Naive thymus-derived CD4-positive, alpha-beta T cell (primary cell): ENCODE measurements at regions of chr3 and their contacts with region 1.

Region 1: GRCh38 chr3:127598841-127599570 is 795 bp downstream of the MCM2 start:
- DNase-seq: no peak
- ATAC-seq: no peak
- H3K4me3 ChIP-seq: peak overlapping the region; percentile 75
- H3K4me3 Mint-ChIP-seq: peak overlapping the region; percentile 62 to 89 (median 82)
- H3K27ac ChIP-seq: peak overlapping the region; percentile 70
- H3K27ac Mint-ChIP-seq: peak overlapping the region; percentile 57 to 93 (median 86)
- H3K4me1 ChIP-seq: peaks cover 7% of the 10 kb centered on the region in 2 donors
- H3K4me1 Mint-ChIP-seq: peaks cover 13 to 57% (median 16%) of the 10 kb centered on the region in 7 donors
- H3K27me3 ChIP-seq: no peaks in the 10 kb centered on the region
- H3K27me3 Mint-ChIP-seq: no peaks in the 10 kb centered on the region

Region 2: GRCh38 chr3:126357295-126358037 is 1241.5 kb before region 1 on chr3 and contains the start of gene KLF15:
- CTCF ChIA-PET with region 1: no interaction called
- POLR2A ChIA-PET with region 1: no interaction called
- intact Hi-C with region 1: loop called in 1 of 2 experiments (anchors 5 kb)
- DNase-seq: peak; percentile 50 to 84 (median 66)
- ATAC-seq: peak; percentile 95
- H3K4me3 ChIP-seq: peak within 1 kb of the TSS; percentile 67
- H3K4me3 Mint-ChIP-seq: peak within 1 kb of the TSS; percentile 89 to 95 (median 91)
- H3K27ac ChIP-seq: no peak within 1 kb of the TSS
- H3K27ac Mint-ChIP-seq: peak within 1 kb of the TSS in 5 of 9 donors; percentile 45 to 93 (median 72)
- H3K4me1 ChIP-seq: peaks cover 4 to 7% of the 10 kb centered on the region in 2 donors
- H3K4me1 Mint-ChIP-seq: peaks cover 4 to 17% (median 11%) of the 10 kb centered on the region in 7 donors
- H3K27me3 ChIP-seq: peaks cover 9 to 10% of the 10 kb centered on the region in 2 donors
- H3K27me3 Mint-ChIP-seq: peaks cover 45 to 52% (median 46%) of the 10 kb centered on the region in 5 donors
- total RNA-seq, gene KLF15: 0.57 to 0.81 TPM in 2 of 5 experiments, not detected in the others

Region 3: GRCh38 chr3:127628788-127629466 is 29.9 kb after region 1 on chr3 and contains the start of gene PODXL2:
- CTCF ChIA-PET with region 1: no interaction called
- POLR2A ChIA-PET with region 1: interaction called, 16 read pairs
- intact Hi-C with region 1: loop called (anchors 1 to 2 kb)
- DNase-seq: peak in 8 of 9 donors; percentile 8 to 64 (median 27)
- ATAC-seq: peak; percentile 63
- H3K4me3 ChIP-seq: peak within 1 kb of the TSS; percentile 62
- H3K4me3 Mint-ChIP-seq: peak within 1 kb of the TSS; percentile 86 to 99 (median 90)
- H3K27ac ChIP-seq: no peak within 1 kb of the TSS
- H3K27ac Mint-ChIP-seq: peak within 1 kb of the TSS; percentile 36 to 86 (median 72)
- H3K4me1 ChIP-seq: peaks cover 10 to 15% of the 10 kb centered on the region in 2 donors
- H3K4me1 Mint-ChIP-seq: peaks cover 11 to 37% (median 27%) of the 10 kb centered on the region in 7 donors
- H3K27me3 ChIP-seq: peaks cover 0 to 3% of the 10 kb centered on the region in 2 donors
- H3K27me3 Mint-ChIP-seq: peaks cover 12 to 63% (median 32%) of the 10 kb centered on the region in 5 donors
- total RNA-seq, gene PODXL2: 2.2 to 5.5 (median 3.6) TPM

Region 4: DNA sequence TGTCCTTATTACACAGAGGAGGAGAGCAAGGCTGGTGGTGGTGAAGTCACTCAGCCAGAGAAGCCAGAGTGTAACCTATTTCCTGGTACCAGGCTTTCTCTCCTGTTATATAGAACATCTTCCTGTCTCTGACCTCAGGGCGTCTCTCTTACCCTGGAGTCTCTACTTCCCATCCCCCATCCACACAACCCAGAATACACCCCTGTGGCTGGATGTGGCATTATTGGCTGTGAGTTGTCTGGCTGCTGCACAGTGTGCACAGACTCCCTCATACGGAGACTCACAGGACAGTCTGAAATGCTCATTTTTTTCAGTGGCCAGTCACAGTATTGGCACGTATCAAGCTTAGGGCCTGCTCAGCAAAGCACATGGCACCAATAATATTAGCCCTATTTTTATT is 38.5 kb after region 1 on chr3:
- CTCF ChIA-PET with region 1: interaction called, 3 read pairs
- POLR2A ChIA-PET with region 1: no interaction called
- intact Hi-C with region 1: loop called in 1 of 2 experiments (anchors 1 kb)
- DNase-seq: peak in 6 of 9 donors; percentile 7 to 49 (median 36)
- ATAC-seq: peak; percentile 81
- H3K4me3 ChIP-seq: no peak overlapping the region
- H3K4me3 Mint-ChIP-seq: peak overlapping the region in 4 of 10 donors; percentile 21 to 49 (median 35)
- H3K27ac ChIP-seq: no peak overlapping the region
- H3K27ac Mint-ChIP-seq: peak overlapping the region in 3 of 9 donors; percentile 52 to 72 (median 61)
- H3K4me1 ChIP-seq: peaks cover 0 to 7% of the 10 kb centered on the region in 2 donors
- H3K4me1 Mint-ChIP-seq: peaks cover 6 to 16% (median 10%) of the 10 kb centered on the region in 7 donors
- H3K27me3 ChIP-seq: peaks cover 0 to 2% of the 10 kb centered on the region in 2 donors
- H3K27me3 Mint-ChIP-seq: peaks cover 7 to 12% (median 9%) of the 10 kb centered on the region in 5 donors

Region 5: GRCh38 chr3:128133273-128134084 is 534.5 kb after region 1 on chr3:
- CTCF ChIA-PET with region 1: no interaction called
- POLR2A ChIA-PET with region 1: no interaction called
- intact Hi-C with region 1: no loop called
- DNase-seq: peak in 5 of 9 donors; percentile 14 to 34 (median 23)
- ATAC-seq: peak; percentile 76
- H3K4me3 ChIP-seq: no peak overlapping the region
- H3K4me3 Mint-ChIP-seq: no peak overlapping the region
- H3K27ac ChIP-seq: no peak overlapping the region
- H3K27ac Mint-ChIP-seq: no peak overlapping the region
- H3K4me1 ChIP-seq: no peaks in the 10 kb centered on the region
- H3K4me1 Mint-ChIP-seq: no peaks in the 10 kb centered on the region
- H3K27me3 ChIP-seq: no peaks in the 10 kb centered on the region
- H3K27me3 Mint-ChIP-seq: peaks cover 0 to 34% (median 3%) of the 10 kb centered on the region in 5 donors